ENCODE measurements at regions of chr2 and their contacts with region 1.

Region 1: GRCh38 chr2:26330113-26330549 is 15.8 kb upstream of the SELENOI start:
- DNase-seq: peak; percentile 79
- ATAC-seq: peak; percentile 94
- H3K4me3 ChIP-seq: no peak overlapping the region
- H3K27ac ChIP-seq: no peak overlapping the region
- H3K4me1 ChIP-seq: peaks cover 6% of the 10 kb centered on the region
- H3K27me3 ChIP-seq: peaks cover 6% of the 10 kb centered on the region
- CTCF ChIP-seq: peak; percentile 80
- POLR2A ChIP-seq: no peak
- RAD21 ChIP-seq: peak; percentile 84

Region 2: GRCh38 chr2:26292665-26293064 is 37.5 kb before region 1 on chr2:
- CTCF ChIA-PET with region 1: no interaction called
- POLR2A ChIA-PET with region 1: interaction called, 11 read pairs
- dilution Hi-C with region 1: no loop called
- in situ Hi-C with region 1: no loop called
- intact Hi-C with region 1: no loop called
- DNase-seq: peak; percentile 62
- ATAC-seq: peak; percentile 78
- H3K4me3 ChIP-seq: no peak overlapping the region
- H3K27ac ChIP-seq: no peak overlapping the region
- H3K4me1 ChIP-seq: no peaks in the 10 kb centered on the region
- H3K27me3 ChIP-seq: no peaks in the 10 kb centered on the region
- CTCF ChIP-seq: no peak
- POLR2A ChIP-seq: no peak
- RAD21 ChIP-seq: no peak

Region 3: DNA sequence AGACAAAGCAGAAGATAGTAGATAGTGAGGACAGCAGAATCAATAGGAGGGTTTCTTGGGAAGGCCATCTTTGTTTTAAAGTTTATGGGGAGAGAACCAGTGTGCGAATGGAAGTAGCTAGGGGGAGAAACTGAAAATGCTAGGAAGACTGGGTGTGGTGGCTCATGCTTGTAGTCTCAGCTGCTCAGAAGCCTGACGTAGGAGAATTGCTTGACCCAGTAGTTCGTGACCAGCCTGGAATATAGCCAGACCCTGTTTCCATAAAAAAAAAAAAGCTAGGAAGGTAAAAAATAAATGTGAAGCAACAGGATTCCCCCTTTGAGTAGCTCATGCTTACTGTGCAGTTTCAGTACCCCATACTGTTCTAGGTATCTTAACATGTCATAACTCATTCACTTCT is 52.4 kb after region 1 on chr2:
- CTCF ChIA-PET with region 1: no interaction called
- POLR2A ChIA-PET with region 1: no interaction called
- dilution Hi-C with region 1: no loop called
- in situ Hi-C with region 1: no loop called
- intact Hi-C with region 1: no loop called
- DNase-seq: no peak
- ATAC-seq: no peak
- H3K4me3 ChIP-seq: no peak overlapping the region
- H3K27ac ChIP-seq: no peak overlapping the region
- H3K4me1 ChIP-seq: no peaks in the 10 kb centered on the region
- H3K27me3 ChIP-seq: no peaks in the 10 kb centered on the region
- CTCF ChIP-seq: no peak
- POLR2A ChIP-seq: no peak
- RAD21 ChIP-seq: no peak

Region 4: GRCh38 chr2:26469092-26469710 is 139.1 kb after region 1 on chr2:
- CTCF ChIA-PET with region 1: no interaction called
- POLR2A ChIA-PET with region 1: no interaction called
- dilution Hi-C with region 1: no loop called
- in situ Hi-C with region 1: no loop called
- intact Hi-C with region 1: loop called (anchors 10 kb)
- DNase-seq: peak; percentile 59
- ATAC-seq: peak; percentile 72
- H3K4me3 ChIP-seq: no peak overlapping the region
- H3K27ac ChIP-seq: no peak overlapping the region
- H3K4me1 ChIP-seq: no peaks in the 10 kb centered on the region
- H3K27me3 ChIP-seq: no peaks in the 10 kb centered on the region; the same call in 1 of the 2 replicates
- CTCF ChIP-seq: peak; percentile 62
- POLR2A ChIP-seq: no peak
- RAD21 ChIP-seq: peak; percentile 65

Region 5: GRCh38 chr2:26483957-26484565 is 153.9 kb after region 1 on chr2:
- CTCF ChIA-PET with region 1: no interaction called
- POLR2A ChIA-PET with region 1: no interaction called
- dilution Hi-C with region 1: no loop called
- in situ Hi-C with region 1: no loop called
- intact Hi-C with region 1: no loop called
- DNase-seq: no peak
- ATAC-seq: peak; percentile 32; the same call in 1 of the 2 replicates
- H3K4me3 ChIP-seq: no peak overlapping the region
- H3K27ac ChIP-seq: no peak overlapping the region
- H3K4me1 ChIP-seq: no peaks in the 10 kb centered on the region
- H3K27me3 ChIP-seq: peaks cover 30% of the 10 kb centered on the region
- CTCF ChIP-seq: no peak
- POLR2A ChIP-seq: no peak
- RAD21 ChIP-seq: no peak

Region 6: DNA sequence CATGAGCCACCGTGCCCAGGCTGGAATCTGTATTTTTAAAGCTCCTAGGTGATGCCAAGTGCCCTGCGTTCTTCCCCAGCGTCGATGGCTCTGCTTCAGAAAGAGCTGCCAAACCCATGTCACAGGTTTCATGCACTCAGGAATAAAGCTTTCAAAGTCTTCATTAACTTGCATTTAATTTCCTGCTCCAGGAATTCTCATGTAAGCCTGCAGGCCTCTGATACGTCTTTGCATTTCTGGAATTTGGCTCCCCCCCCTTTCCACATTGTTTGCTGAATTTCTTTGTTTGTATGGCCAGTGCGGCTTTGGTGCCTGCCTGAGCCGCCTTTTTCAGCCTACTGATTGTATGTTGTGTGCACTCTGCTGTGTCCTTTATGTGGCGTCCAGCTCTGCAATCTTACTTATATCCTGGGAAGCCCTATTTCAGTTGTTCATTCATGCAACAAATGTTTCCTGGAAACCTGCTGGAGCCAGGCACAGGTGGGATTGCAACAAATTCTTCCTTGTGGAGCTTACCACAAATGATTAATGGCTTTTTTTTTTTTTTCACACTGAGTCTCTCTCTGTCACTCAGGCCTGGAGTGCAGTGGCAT is 165.7 kb after region 1 on chr2:
- CTCF ChIA-PET with region 1: no interaction called
- POLR2A ChIA-PET with region 1: no interaction called
- dilution Hi-C with region 1: no loop called
- in situ Hi-C with region 1: no loop called
- intact Hi-C with region 1: no loop called
- DNase-seq: no peak
- ATAC-seq: no peak
- H3K4me3 ChIP-seq: no peak overlapping the region
- H3K27ac ChIP-seq: no peak overlapping the region
- H3K4me1 ChIP-seq: no peaks in the 10 kb centered on the region
- H3K27me3 ChIP-seq: peaks cover 54% of the 10 kb centered on the region
- CTCF ChIP-seq: no peak
- POLR2A ChIP-seq: no peak
- RAD21 ChIP-seq: no peak